Dorsolateral prefrontal cortex (tissue), 120 donors: ENCODE measurements at regions of chr14 and their contacts with region 1.

Region 1: GRCh38 chr14:58805605-58806409 is 168.0 kb downstream of the DACT1 start:
- DNase-seq: no peak
- H3K4me3 ChIP-seq: no peak overlapping the region
- H3K27ac ChIP-seq: no peak overlapping the region
- H3K27me3 ChIP-seq: no peaks in the 10 kb centered on the region
- CTCF ChIP-seq: no peak

Region 2: GRCh38 chr14:58788655-58789505 is 16.9 kb before region 1 on chr14:
- intact Hi-C with region 1: loop called in 1 of 2 experiments (anchors 2 kb)
- DNase-seq: peak in 2 of 10 donors; percentile 35 to 37
- H3K4me3 ChIP-seq: no peak overlapping the region
- H3K27ac ChIP-seq: peak overlapping the region in 56 of 59 donors; percentile 10 to 93 (median 72)
- H3K27me3 ChIP-seq: no peaks in the 10 kb centered on the region
- CTCF ChIP-seq: no peak